Endothelial cell of umbilical vein (primary cell): ENCODE measurements at regions of chr7 and their contacts with region 1.

Region 1: GRCh38 chr7:151754142-151754590 is 122.7 kb downstream of the PRKAG2 start:
- DNase-seq: peak; percentile 97
- H3K4me3 ChIP-seq: no peak overlapping the region
- H3K27ac ChIP-seq: peak overlapping the region; percentile 83
- H3K4me1 ChIP-seq: peaks cover 18% of the 10 kb centered on the region
- H3K27me3 ChIP-seq: no peaks in the 10 kb centered on the region
- CTCF ChIP-seq: peak; percentile 97 to 99
- POLR2A ChIP-seq: peak; percentile 66

Region 2: DNA sequence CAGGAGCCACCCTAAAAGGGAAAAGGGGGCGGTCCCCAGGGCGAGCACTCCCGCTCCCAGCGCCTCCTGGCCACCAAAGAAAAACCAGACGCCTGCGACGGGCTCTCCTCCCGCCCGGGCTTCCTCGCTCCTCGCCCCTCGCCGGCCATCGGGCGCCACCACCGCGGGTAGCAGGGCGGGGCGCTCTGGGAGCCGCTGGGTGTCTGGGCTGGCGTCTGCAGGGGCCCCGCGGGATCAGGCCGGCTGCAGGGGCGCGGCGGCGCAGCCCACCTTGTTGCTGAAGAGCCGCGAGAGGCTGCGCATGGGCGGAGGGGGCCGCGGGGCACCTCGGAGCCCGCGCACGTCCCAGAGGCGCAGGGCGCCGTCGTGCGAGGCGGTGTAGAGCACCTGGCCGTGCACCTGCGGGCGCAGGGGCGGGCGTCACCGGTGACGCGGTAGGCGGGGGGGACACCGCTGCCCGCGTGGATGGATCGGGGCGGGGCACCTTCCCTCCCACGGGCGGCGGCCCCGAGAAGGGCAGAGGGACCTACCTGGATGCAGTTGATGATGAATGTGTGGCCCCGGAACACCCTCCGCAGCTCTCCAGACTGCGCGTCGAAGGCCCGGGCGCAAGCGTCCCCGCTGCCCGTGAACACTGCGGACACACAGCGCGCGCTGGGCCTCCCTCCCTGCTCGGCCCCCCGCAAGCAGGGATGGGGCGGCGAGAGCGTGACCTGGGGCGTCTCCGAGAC is 372.7 kb before region 1 on chr7:
- CTCF ChIA-PET with region 1: no interaction called
- POLR2A ChIA-PET with region 1: no interaction called
- dilution Hi-C with region 1: no loop called
- intact Hi-C with region 1: no loop called
- DNase-seq: no peak
- H3K4me3 ChIP-seq: no peak overlapping the region
- H3K27ac ChIP-seq: no peak overlapping the region
- H3K4me1 ChIP-seq: no peaks in the 10 kb centered on the region
- H3K27me3 ChIP-seq: peaks cover 16 to 27% of the 10 kb centered on the region in 2 experiments
- CTCF ChIP-seq: no peak
- POLR2A ChIP-seq: no peak

Region 3: GRCh38 chr7:151570366-151570915 is 183.7 kb before region 1 on chr7:
- CTCF ChIA-PET with region 1: interaction called, 22 read pairs
- POLR2A ChIA-PET with region 1: no interaction called
- dilution Hi-C with region 1: no loop called
- intact Hi-C with region 1: loop called (anchors 1 kb)
- DNase-seq: peak; percentile 61
- H3K4me3 ChIP-seq: no peak overlapping the region
- H3K27ac ChIP-seq: no peak overlapping the region
- H3K4me1 ChIP-seq: no peaks in the 10 kb centered on the region
- H3K27me3 ChIP-seq: no peaks in the 10 kb centered on the region
- CTCF ChIP-seq: peak; percentile 37
- POLR2A ChIP-seq: no peak

Region 4: DNA sequence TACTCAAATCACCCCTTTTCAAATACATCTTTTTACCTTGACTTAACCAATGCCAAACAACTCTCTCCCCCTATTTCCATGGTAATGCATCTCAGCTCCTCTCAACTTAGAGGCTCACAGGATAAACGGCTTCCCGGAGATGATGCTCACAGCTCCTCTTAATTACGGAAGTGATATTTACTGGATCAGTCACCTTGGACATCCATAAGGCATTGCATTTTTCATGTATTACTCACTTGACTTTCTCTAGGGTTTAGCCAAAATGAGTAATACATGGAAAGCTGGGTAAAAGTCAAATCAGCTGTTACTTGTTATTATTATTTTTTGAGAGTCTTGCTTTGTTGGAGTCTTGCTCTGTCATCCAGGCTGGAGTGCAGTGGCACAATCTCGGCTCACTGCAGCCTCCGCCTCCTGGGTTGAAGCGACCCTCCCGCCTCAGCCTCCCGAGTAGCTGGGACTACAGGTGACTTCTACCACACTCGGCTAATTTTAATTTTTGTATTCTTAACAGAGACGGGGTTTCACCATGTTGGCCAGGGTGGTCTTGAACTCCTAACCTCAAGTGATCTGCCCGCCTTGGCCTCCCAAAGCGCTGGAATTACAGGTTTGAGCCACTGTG is 161.2 kb before region 1 on chr7:
- CTCF ChIA-PET with region 1: interaction called, 6 read pairs
- POLR2A ChIA-PET with region 1: no interaction called
- dilution Hi-C with region 1: no loop called
- intact Hi-C with region 1: loop called (anchors 1 kb)
- DNase-seq: peak; percentile 76
- H3K4me3 ChIP-seq: no peak overlapping the region
- H3K27ac ChIP-seq: peak overlapping the region; percentile 36
- H3K4me1 ChIP-seq: peaks cover 39% of the 10 kb centered on the region
- H3K27me3 ChIP-seq: no peaks in the 10 kb centered on the region
- CTCF ChIP-seq: no peak
- POLR2A ChIP-seq: no peak

Region 5: GRCh38 chr7:151626422-151627115 is 127.6 kb before region 1 on chr7:
- CTCF ChIA-PET with region 1: interaction called, 50 read pairs
- POLR2A ChIA-PET with region 1: no interaction called
- dilution Hi-C with region 1: no loop called
- intact Hi-C with region 1: loop called (anchors 1 kb)
- DNase-seq: no peak
- H3K4me3 ChIP-seq: no peak overlapping the region
- H3K27ac ChIP-seq: no peak overlapping the region
- H3K4me1 ChIP-seq: peaks cover 49% of the 10 kb centered on the region
- H3K27me3 ChIP-seq: no peaks in the 10 kb centered on the region
- CTCF ChIP-seq: peak; percentile 16 to 34
- POLR2A ChIP-seq: no peak

Region 6: GRCh38 chr7:151687523-151688218 is 66.5 kb before region 1 on chr7:
- CTCF ChIA-PET with region 1: interaction called, 9 read pairs
- POLR2A ChIA-PET with region 1: no interaction called
- dilution Hi-C with region 1: no loop called
- intact Hi-C with region 1: loop called (anchors 1 kb)
- DNase-seq: peak; percentile 86
- H3K4me3 ChIP-seq: no peak overlapping the region
- H3K27ac ChIP-seq: peak overlapping the region; percentile 70
- H3K4me1 ChIP-seq: peaks cover 24% of the 10 kb centered on the region
- H3K27me3 ChIP-seq: no peaks in the 10 kb centered on the region
- CTCF ChIP-seq: no peak
- POLR2A ChIP-seq: peak; percentile 46

Region 7: GRCh38 chr7:151727579-151728285 is 26.4 kb before region 1 on chr7:
- CTCF ChIA-PET with region 1: interaction called, 7 read pairs
- POLR2A ChIA-PET with region 1: no interaction called
- dilution Hi-C with region 1: no loop called
- intact Hi-C with region 1: loop called (anchors 2 kb)
- DNase-seq: peak; percentile 87
- H3K4me3 ChIP-seq: no peak overlapping the region
- H3K27ac ChIP-seq: peak overlapping the region; percentile 65
- H3K4me1 ChIP-seq: peaks cover 11% of the 10 kb centered on the region
- H3K27me3 ChIP-seq: no peaks in the 10 kb centered on the region
- CTCF ChIP-seq: no peak
- POLR2A ChIP-seq: no peak

Region 8: GRCh38 chr7:151736403-151736909 is 17.7 kb before region 1 on chr7:
- CTCF ChIA-PET with region 1: interaction called, 23 read pairs
- POLR2A ChIA-PET with region 1: no interaction called
- dilution Hi-C with region 1: no loop called
- intact Hi-C with region 1: loop called (anchors 1 kb)
- DNase-seq: peak; percentile 92
- H3K4me3 ChIP-seq: peak overlapping the region in 2 of 3 experiments; percentile 32 to 35
- H3K27ac ChIP-seq: peak overlapping the region; percentile 75
- H3K4me1 ChIP-seq: peaks cover 15% of the 10 kb centered on the region
- H3K27me3 ChIP-seq: no peaks in the 10 kb centered on the region
- CTCF ChIP-seq: peak in 1 of 2 donors; percentile 23
- POLR2A ChIP-seq: peak; percentile 67

Region 9: DNA sequence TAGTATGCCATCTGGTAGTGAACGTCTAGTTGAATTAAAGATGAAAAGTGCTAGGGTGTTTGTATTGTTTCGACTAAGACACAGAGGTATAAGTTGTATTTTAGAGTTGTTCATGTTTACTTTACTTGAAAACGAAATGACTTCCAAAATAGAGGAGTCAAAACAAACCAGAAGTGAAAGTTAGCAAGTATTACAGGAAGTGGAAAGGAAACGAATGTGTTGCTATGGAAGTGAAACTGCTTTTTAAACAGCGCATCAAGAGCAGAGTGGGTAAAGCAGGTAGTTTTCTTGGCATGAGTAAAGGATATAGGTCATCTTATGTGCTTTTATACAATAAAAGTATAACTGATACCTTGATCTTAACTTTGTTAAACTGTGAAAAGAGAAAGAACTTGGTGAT is 182.0 kb after region 1 on chr7:
- CTCF ChIA-PET with region 1: no interaction called
- POLR2A ChIA-PET with region 1: no interaction called
- dilution Hi-C with region 1: no loop called
- intact Hi-C with region 1: no loop called
- DNase-seq: peak; percentile 17
- H3K4me3 ChIP-seq: no peak overlapping the region
- H3K27ac ChIP-seq: no peak overlapping the region
- H3K4me1 ChIP-seq: peaks cover 4% of the 10 kb centered on the region
- H3K27me3 ChIP-seq: peaks cover 8 to 10% of the 10 kb centered on the region in 2 experiments
- CTCF ChIP-seq: no peak
- POLR2A ChIP-seq: no peak

Region 10: GRCh38 chr7:152522571-152523067 is 768.5 kb after region 1 on chr7:
- CTCF ChIA-PET with region 1: no interaction called
- POLR2A ChIA-PET with region 1: no interaction called
- dilution Hi-C with region 1: no loop called
- intact Hi-C with region 1: no loop called
- DNase-seq: peak; percentile 15
- H3K4me3 ChIP-seq: no peak overlapping the region
- H3K27ac ChIP-seq: no peak overlapping the region
- H3K4me1 ChIP-seq: no peaks in the 10 kb centered on the region
- H3K27me3 ChIP-seq: no peaks in the 10 kb centered on the region
- CTCF ChIP-seq: no peak
- POLR2A ChIP-seq: no peak